Mammary epithelial cell (primary cell): ENCODE measurements at regions of chr3 and their contacts with region 1.

Region 1: DNA sequence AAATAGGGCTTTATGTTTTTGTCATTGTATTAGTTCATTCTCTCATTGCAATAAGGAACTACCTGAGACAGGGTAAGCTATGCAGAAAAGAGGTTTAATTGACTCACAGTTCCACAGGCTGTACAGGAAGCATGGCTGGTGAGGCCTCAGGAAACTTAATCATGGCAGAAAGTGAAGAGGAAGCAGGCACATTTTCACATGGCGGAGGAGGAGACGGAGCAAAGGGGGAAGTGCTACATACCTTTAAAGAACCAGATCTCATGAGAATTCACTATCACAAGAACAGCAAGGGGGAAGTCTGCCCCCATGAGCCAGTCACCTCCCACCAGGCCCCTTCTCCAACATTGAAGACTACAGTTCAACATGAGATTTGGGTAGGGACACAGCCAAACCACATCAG is 25.6 kb downstream of the CEP63 start:
- DNase-seq: no peak
- H3K4me3 ChIP-seq: no peak overlapping the region
- H3K27ac ChIP-seq: no peak overlapping the region
- H3K4me1 ChIP-seq: no peaks in the 10 kb centered on the region
- H3K27me3 ChIP-seq: no peaks in the 10 kb centered on the region
- CTCF ChIP-seq: no peak

Region 2: DNA sequence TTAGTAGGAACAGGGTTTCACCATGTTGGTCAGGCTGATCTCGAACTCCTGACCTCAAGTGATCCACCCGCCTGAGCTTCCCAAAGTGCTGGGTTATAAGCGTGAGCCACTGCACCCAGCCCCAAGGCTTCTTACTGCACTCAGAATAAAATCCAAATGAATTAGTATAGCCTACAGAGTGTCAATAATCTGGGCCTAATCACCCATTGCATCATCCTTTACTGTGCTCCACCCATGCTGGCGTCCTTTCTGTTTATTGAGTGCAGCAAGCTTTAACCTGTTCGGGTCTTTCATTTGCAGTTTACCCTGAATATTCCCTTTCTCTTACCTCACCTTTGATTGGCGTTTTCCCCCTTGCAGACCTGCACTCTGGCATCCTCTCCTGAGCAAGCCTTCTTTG is 52.1 kb after region 1 on chr3:
- CTCF ChIA-PET with region 1: no interaction called
- dilution Hi-C with region 1: loop called (anchors 5 kb)
- in situ Hi-C with region 1: no loop called
- intact Hi-C with region 1: no loop called
- DNase-seq: peak; percentile 1
- H3K4me3 ChIP-seq: no peak overlapping the region
- H3K27ac ChIP-seq: no peak overlapping the region
- H3K4me1 ChIP-seq: no peaks in the 10 kb centered on the region
- H3K27me3 ChIP-seq: no peaks in the 10 kb centered on the region
- CTCF ChIP-seq: no peak

Region 3: DNA sequence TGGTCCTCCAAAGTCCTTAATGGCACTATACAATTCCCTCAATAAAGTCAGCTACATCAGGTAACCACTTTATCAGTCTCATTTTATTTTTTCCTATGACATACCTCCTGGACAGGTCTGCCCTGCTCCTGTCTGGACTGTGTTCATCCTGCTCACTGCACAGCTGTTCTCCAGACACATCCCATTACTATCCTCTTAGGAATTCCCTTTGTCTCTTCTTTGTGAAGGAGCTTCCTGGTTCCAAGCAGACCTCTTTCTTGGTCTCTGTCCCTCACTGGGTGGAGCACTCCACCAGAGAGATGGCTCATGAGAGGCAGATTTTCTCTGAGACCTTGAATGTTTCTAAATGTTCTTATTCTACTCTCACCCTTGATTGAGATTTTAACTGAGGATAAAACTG is 79.3 kb after region 1 on chr3:
- CTCF ChIA-PET with region 1: no interaction called
- dilution Hi-C with region 1: no loop called
- in situ Hi-C with region 1: no loop called
- intact Hi-C with region 1: no loop called
- DNase-seq: peak; percentile 17
- H3K4me3 ChIP-seq: no peak overlapping the region
- H3K27ac ChIP-seq: no peak overlapping the region
- H3K4me1 ChIP-seq: peaks cover 8% of the 10 kb centered on the region
- H3K27me3 ChIP-seq: no peaks in the 10 kb centered on the region
- CTCF ChIP-seq: no peak